ENCODE measurements at regions of chr12 and their contacts with region 1.

Region 1: GRCh38 chr12:62282057-62282774 is 22.0 kb downstream of the USP15 start:
- DNase-seq: no peak
- ATAC-seq: no peak
- H3K4me3 Mint-ChIP-seq: no peak overlapping the region
- H3K27ac Mint-ChIP-seq: no peak overlapping the region
- H3K4me1 Mint-ChIP-seq: peaks cover 72% of the 10 kb centered on the region
- H3K27me3 Mint-ChIP-seq: no peaks in the 10 kb centered on the region
- CTCF ChIP-seq: no peak

Region 2: DNA sequence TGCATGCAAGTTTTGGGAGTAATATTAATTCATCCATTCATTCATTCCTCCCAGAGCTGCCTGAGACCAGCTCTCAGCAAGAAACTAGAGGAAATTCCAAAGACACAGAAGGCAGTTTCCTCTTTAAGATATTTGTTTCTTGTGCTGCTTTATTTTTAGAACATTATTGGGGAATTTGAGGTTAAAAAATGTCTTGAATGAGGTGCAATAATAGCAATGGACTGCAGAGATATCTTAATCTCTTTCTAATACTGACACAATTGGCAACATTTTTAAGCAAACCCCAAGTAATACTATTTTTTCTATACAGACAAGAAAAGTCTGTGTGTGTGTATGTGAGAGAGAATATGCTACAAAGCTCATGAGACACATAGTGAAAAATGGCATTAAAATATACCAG is 212.2 kb before region 1 on chr12:
- CTCF ChIA-PET with region 1: no interaction called
- POLR2A ChIA-PET with region 1: no interaction called
- intact Hi-C with region 1: no loop called
- DNase-seq: no peak
- ATAC-seq: no peak
- H3K4me3 Mint-ChIP-seq: no peak overlapping the region
- H3K27ac Mint-ChIP-seq: no peak overlapping the region
- H3K4me1 Mint-ChIP-seq: no peaks in the 10 kb centered on the region
- H3K27me3 Mint-ChIP-seq: peaks cover 2% of the 10 kb centered on the region
- CTCF ChIP-seq: no peak

Region 3: GRCh38 chr12:62319058-62319457 is 36.8 kb after region 1 on chr12:
- CTCF ChIA-PET with region 1: no interaction called
- POLR2A ChIA-PET with region 1: no interaction called
- intact Hi-C with region 1: loop called (anchors 5 kb)
- DNase-seq: no peak
- ATAC-seq: peak; percentile 45
- H3K4me3 Mint-ChIP-seq: no peak overlapping the region
- H3K27ac Mint-ChIP-seq: peak overlapping the region; percentile 21
- H3K4me1 Mint-ChIP-seq: peaks cover 27% of the 10 kb centered on the region
- H3K27me3 Mint-ChIP-seq: no peaks in the 10 kb centered on the region
- CTCF ChIP-seq: no peak